ENCODE measurements at regions of chr6 and their contacts with region 1.

Region 1: GRCh38 chr6:166382933-166383801 is at the start of gene MPC1:
- DNase-seq: peak; percentile 94
- ATAC-seq: peak; percentile 88
- H3K4me3 ChIP-seq: peak within 1 kb of the TSS; percentile 88
- H3K27ac ChIP-seq: peak within 1 kb of the TSS; percentile 72
- H3K4me1 ChIP-seq: peaks cover 4% of the 10 kb centered on the region
- H3K27me3 ChIP-seq: no peaks in the 10 kb centered on the region
- CTCF ChIP-seq: no peak
- total RNA-seq, gene MPC1: 10.0 and 26.7 TPM in 2 replicates

Region 2: GRCh38 chr6:166156942-166157341 is 226.2 kb before region 1 on chr6:
- CTCF ChIA-PET with region 1: no interaction called
- POLR2A ChIA-PET with region 1: no interaction called
- intact Hi-C with region 1: no loop called
- DNase-seq: peak; percentile 29
- ATAC-seq: no peak
- H3K4me3 ChIP-seq: no peak overlapping the region
- H3K27ac ChIP-seq: no peak overlapping the region
- H3K4me1 ChIP-seq: no peaks in the 10 kb centered on the region
- H3K27me3 ChIP-seq: peaks cover 13% of the 10 kb centered on the region; the same call in 1 of the 2 replicates
- CTCF ChIP-seq: peak; percentile 48

Region 3: GRCh38 chr6:166275714-166276166 is 107.4 kb before region 1 on chr6:
- CTCF ChIA-PET with region 1: interaction called, 3 read pairs
- POLR2A ChIA-PET with region 1: no interaction called
- intact Hi-C with region 1: loop called (anchors 5 kb)
- DNase-seq: peak; percentile 52
- ATAC-seq: peak; percentile 88
- H3K4me3 ChIP-seq: no peak overlapping the region
- H3K27ac ChIP-seq: no peak overlapping the region
- H3K4me1 ChIP-seq: no peaks in the 10 kb centered on the region
- H3K27me3 ChIP-seq: no peaks in the 10 kb centered on the region
- CTCF ChIP-seq: peak; percentile 90

Region 4: DNA sequence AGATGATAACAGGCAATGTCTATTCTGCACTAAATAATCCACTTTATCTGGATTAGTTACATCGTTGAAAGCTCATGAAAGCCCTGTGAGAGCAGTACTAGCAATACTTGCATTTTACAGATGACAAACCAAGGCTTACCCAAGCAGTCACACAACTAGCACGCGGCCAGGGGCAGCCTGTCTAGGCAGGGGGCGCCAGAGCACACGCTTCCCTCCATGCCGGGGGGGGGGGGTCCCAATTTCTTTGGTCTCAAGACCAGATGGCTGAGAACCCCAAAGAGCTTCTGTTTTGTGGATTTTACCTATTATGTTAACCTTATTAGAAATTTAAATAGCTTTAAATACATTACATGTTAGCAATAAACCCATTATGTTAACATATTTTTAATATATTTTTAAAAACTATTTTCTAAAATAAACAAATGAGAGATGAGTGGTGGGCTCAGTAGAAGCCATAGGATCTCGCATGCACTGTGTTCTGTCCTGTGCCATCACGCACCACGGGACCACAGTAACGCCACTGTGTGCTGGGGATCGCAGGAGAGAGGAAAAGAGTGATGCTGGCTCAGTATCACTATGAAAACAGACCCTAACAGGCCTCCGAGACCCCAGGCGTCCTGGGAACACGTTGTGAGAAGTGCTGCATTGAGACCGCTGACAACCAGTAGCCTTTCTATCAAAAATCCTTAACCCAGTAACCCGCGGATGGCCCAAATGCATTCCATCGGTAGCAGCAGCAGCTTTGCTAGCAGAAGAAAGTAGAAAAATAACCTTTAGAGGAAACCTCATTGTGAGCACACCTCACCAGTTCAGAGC is 69.7 kb before region 1 on chr6:
- CTCF ChIA-PET with region 1: no interaction called
- POLR2A ChIA-PET with region 1: no interaction called
- intact Hi-C with region 1: loop called (anchors 2 kb)
- DNase-seq: peak; percentile 52
- ATAC-seq: peak; percentile 92
- H3K4me3 ChIP-seq: no peak overlapping the region
- H3K27ac ChIP-seq: no peak overlapping the region
- H3K4me1 ChIP-seq: no peaks in the 10 kb centered on the region
- H3K27me3 ChIP-seq: peaks cover 6% of the 10 kb centered on the region; the same call in 1 of the 2 replicates
- CTCF ChIP-seq: peak; percentile 69

Region 5: GRCh38 chr6:166342349-166343149 is 40.6 kb before region 1 on chr6 and contains the start of gene SFT2D1:
- CTCF ChIA-PET with region 1: no interaction called
- POLR2A ChIA-PET with region 1: no interaction called
- intact Hi-C with region 1: loop called (anchors 2 kb)
- DNase-seq: peak; percentile 49
- ATAC-seq: peak; percentile 92
- H3K4me3 ChIP-seq: peak within 1 kb of the TSS; percentile 98
- H3K27ac ChIP-seq: peak within 1 kb of the TSS; percentile 36
- H3K4me1 ChIP-seq: no peaks in the 10 kb centered on the region
- H3K27me3 ChIP-seq: no peaks in the 10 kb centered on the region
- CTCF ChIP-seq: no peak
- total RNA-seq, gene SFT2D1: 28.0 and 32.1 TPM in 2 replicates

Region 6: DNA sequence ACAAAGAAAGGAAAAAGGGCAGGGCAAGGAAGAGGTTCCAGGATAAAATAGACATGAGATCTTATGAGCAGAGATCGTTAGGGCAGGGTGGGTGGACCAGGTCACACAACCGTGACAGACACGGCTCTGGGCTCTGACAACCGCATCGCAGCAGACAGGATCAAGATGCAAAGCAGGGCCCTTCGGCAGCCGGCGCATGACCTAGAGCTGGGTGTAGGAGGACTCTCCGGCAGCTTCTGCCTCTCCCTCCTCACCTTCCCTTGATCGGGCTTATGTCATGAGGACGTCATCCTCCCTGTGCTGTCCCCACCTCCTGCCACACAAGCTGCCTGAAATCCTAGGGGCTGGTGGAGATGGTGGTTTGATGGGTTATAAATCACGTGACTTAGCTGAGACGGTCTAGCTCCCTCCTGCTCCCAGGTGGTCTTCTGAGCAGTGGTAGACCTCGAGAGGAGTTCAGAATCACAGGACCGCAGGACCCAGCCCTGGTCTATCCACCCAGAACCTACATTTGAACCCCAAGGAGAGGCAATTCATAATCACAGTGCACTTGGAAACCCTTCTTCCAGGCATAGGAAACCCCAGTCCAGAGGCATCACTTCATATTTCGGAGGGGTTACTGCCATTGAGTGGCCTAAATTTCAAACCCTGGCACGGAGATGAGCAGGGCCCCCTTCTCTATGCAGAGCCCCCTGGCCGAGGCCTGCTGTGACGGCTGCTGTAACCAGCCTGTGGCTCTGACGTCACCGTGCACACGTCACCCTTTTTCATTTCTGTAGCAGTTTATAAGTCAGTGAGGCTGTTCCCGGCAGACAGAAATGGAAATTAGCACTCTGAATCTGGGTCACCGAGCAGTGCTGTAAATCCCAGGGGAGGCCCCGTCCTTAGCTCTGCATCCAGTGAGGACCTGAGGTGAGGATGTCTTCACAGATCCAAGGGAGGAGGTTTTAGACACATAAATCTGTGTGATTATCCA is 731.1 kb after region 1 on chr6:
- CTCF ChIA-PET with region 1: no interaction called
- POLR2A ChIA-PET with region 1: no interaction called
- intact Hi-C with region 1: no loop called
- DNase-seq: no peak
- ATAC-seq: no peak
- H3K4me3 ChIP-seq: no peak overlapping the region
- H3K27ac ChIP-seq: no peak overlapping the region
- H3K4me1 ChIP-seq: no peaks in the 10 kb centered on the region
- H3K27me3 ChIP-seq: peaks cover 46% of the 10 kb centered on the region
- CTCF ChIP-seq: no peak